Naive thymus-derived CD4-positive, alpha-beta T cell (primary cell): ENCODE measurements at regions of chr11 and their contacts with region 1.

Region 1: GRCh38 chr11:31397239-31397834 is 27.7 kb downstream of the DNAJC24 start:
- DNase-seq: peak in 5 of 9 donors; percentile 18 to 38 (median 35)
- ATAC-seq: peak; percentile 37
- H3K4me3 ChIP-seq: no peak overlapping the region
- H3K4me3 Mint-ChIP-seq: no peak overlapping the region
- H3K27ac ChIP-seq: no peak overlapping the region
- H3K27ac Mint-ChIP-seq: no peak overlapping the region
- H3K4me1 ChIP-seq: no peaks in the 10 kb centered on the region
- H3K4me1 Mint-ChIP-seq: peaks cover 0 to 7% (median 6%) of the 10 kb centered on the region in 7 donors
- H3K27me3 ChIP-seq: no peaks in the 10 kb centered on the region
- H3K27me3 Mint-ChIP-seq: no peaks in the 10 kb centered on the region

Region 2: GRCh38 chr11:30059172-30059815 is 1338.0 kb before region 1 on chr11:
- CTCF ChIA-PET with region 1: no interaction called
- POLR2A ChIA-PET with region 1: no interaction called
- intact Hi-C with region 1: no loop called
- DNase-seq: no peak
- ATAC-seq: no peak
- H3K4me3 ChIP-seq: no peak overlapping the region
- H3K4me3 Mint-ChIP-seq: no peak overlapping the region
- H3K27ac ChIP-seq: no peak overlapping the region
- H3K27ac Mint-ChIP-seq: no peak overlapping the region
- H3K4me1 ChIP-seq: no peaks in the 10 kb centered on the region
- H3K4me1 Mint-ChIP-seq: no peaks in the 10 kb centered on the region
- H3K27me3 ChIP-seq: no peaks in the 10 kb centered on the region
- H3K27me3 Mint-ChIP-seq: no peaks in the 10 kb centered on the region

Region 3: GRCh38 chr11:31340903-31341572 is 56.3 kb before region 1 on chr11:
- CTCF ChIA-PET with region 1: interaction called, 3 read pairs
- POLR2A ChIA-PET with region 1: no interaction called
- intact Hi-C with region 1: loop called in 1 of 2 experiments (anchors 1 kb)
- DNase-seq: peak in 5 of 9 donors; percentile 9 to 24 (median 13)
- ATAC-seq: no peak
- H3K4me3 ChIP-seq: no peak overlapping the region
- H3K4me3 Mint-ChIP-seq: no peak overlapping the region
- H3K27ac ChIP-seq: no peak overlapping the region
- H3K27ac Mint-ChIP-seq: no peak overlapping the region
- H3K4me1 ChIP-seq: no peaks in the 10 kb centered on the region
- H3K4me1 Mint-ChIP-seq: peaks cover 0 to 3% (median 0%) of the 10 kb centered on the region in 7 donors
- H3K27me3 ChIP-seq: no peaks in the 10 kb centered on the region
- H3K27me3 Mint-ChIP-seq: peaks cover 5 to 27% (median 18%) of the 10 kb centered on the region in 5 donors

Region 4: DNA sequence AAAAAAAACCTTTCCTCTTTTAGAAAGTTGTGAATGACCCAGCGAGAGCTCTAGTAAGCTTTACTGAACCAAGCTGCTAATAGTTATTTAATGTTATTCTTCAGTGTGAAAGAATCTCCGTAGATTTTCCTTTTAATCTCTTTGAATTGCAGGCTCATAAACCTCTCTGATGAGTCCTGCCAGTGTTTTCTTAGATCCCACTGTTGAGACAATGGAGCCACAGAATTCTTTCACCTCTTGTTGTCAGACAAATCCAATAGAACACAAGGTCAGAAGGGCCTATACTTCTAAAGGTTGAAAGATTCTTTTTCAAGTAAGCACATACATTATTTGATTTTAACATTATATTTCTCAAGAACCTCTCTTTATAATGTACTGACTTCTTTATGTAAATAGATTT is 24.5 kb after region 1 on chr11:
- CTCF ChIA-PET with region 1: no interaction called
- POLR2A ChIA-PET with region 1: no interaction called
- intact Hi-C with region 1: no loop called
- DNase-seq: no peak
- ATAC-seq: no peak
- H3K4me3 ChIP-seq: no peak overlapping the region
- H3K4me3 Mint-ChIP-seq: no peak overlapping the region
- H3K27ac ChIP-seq: no peak overlapping the region
- H3K27ac Mint-ChIP-seq: no peak overlapping the region
- H3K4me1 ChIP-seq: no peaks in the 10 kb centered on the region
- H3K4me1 Mint-ChIP-seq: peaks cover 0 to 8% (median 0%) of the 10 kb centered on the region in 7 donors
- H3K27me3 ChIP-seq: no peaks in the 10 kb centered on the region
- H3K27me3 Mint-ChIP-seq: no peaks in the 10 kb centered on the region

Region 5: DNA sequence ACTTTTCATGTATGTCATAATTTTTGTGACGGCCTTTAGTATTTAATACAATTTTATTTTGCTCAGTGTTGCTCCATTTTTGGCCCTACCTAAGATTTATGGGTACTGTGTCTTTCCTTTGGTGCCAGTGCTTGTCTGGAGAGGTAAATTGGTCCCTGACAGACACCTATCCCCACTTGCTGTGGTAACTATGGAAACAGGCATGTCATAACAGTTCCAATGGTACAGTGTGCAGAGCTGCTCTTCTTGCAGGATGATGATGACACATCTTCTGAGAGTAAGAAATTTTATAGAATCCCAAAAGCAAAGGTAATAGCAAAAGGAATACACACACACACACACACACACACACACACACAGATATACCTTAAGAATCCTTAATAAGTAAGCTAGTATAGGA is 230.8 kb after region 1 on chr11:
- CTCF ChIA-PET with region 1: no interaction called
- POLR2A ChIA-PET with region 1: no interaction called
- intact Hi-C with region 1: no loop called
- DNase-seq: no peak
- ATAC-seq: no peak
- H3K4me3 ChIP-seq: no peak overlapping the region
- H3K4me3 Mint-ChIP-seq: no peak overlapping the region
- H3K27ac ChIP-seq: no peak overlapping the region
- H3K27ac Mint-ChIP-seq: no peak overlapping the region
- H3K4me1 ChIP-seq: no peaks in the 10 kb centered on the region
- H3K4me1 Mint-ChIP-seq: no peaks in the 10 kb centered on the region
- H3K27me3 ChIP-seq: no peaks in the 10 kb centered on the region
- H3K27me3 Mint-ChIP-seq: no peaks in the 10 kb centered on the region

Region 6: DNA sequence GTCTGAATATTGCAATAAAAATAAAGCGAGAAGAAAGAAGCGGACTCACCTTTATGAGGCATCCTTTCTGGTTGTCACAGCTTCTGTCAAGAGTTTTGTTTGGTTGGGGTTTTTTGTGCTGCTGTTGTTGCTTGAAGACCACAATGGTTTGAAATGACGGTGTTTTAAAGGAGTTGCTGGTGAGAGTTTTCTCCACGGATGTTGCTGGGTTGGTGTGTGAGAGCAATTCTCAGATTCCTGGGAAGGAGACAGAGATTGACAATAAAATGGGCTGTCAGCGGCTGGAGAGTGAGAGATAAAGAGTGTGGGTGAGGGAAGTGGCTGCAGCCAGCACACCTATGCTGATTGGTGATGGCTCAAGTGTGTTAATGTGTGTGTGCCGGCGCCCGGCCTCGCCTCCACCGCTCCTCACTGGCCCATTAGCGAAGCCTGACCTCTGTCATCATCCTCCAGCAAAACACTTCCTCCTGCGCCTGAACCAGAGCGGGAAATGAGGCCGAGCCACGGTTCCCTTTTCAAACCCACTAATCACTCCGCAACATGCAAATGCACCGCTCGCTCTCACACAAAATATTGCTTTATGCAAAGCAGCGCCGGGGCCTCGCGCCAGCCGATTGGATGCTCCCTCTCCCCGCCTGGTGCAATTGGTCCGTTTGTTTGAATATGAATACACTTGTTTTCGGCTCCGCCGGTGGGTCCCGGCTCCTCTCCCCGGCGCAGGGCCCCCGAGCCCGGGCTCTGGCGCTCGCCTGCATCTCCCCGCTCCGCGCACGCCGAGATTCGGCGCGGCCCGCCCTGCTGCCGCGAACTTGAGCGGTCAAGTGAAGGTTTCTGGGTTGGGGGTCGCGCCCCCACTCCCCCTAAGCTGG is 413.7 kb after region 1 on chr11 and contains the start of gene PAX6:
- CTCF ChIA-PET with region 1: no interaction called
- POLR2A ChIA-PET with region 1: no interaction called
- intact Hi-C with region 1: loop called in 1 of 2 experiments (anchors 10 kb)
- DNase-seq: peak in 2 of 9 donors; percentile 19 to 43
- ATAC-seq: peak; percentile 77
- H3K4me3 ChIP-seq: peak within 1 kb of the TSS; percentile 46
- H3K4me3 Mint-ChIP-seq: peak within 1 kb of the TSS; percentile 73 to 94 (median 84)
- H3K27ac ChIP-seq: no peak within 1 kb of the TSS
- H3K27ac Mint-ChIP-seq: peak within 1 kb of the TSS in 5 of 9 donors; percentile 8 to 73 (median 59)
- H3K4me1 ChIP-seq: peaks cover 16 to 28% of the 10 kb centered on the region in 2 donors
- H3K4me1 Mint-ChIP-seq: peaks cover 22 to 73% (median 61%) of the 10 kb centered on the region in 7 donors
- H3K27me3 ChIP-seq: peaks cover 16 to 66% of the 10 kb centered on the region in 2 donors
- H3K27me3 Mint-ChIP-seq: peaks cover 73 to 86% (median 77%) of the 10 kb centered on the region in 5 donors
- total RNA-seq, gene PAX6: not detected

Region 7: GRCh38 chr11:31870609-31871309 is 473.4 kb after region 1 on chr11:
- CTCF ChIA-PET with region 1: no interaction called
- POLR2A ChIA-PET with region 1: no interaction called
- intact Hi-C with region 1: loop called in 1 of 2 experiments (anchors 5 kb)
- DNase-seq: peak in 2 of 9 donors; percentile 2 to 4
- ATAC-seq: no peak
- H3K4me3 ChIP-seq: no peak overlapping the region
- H3K4me3 Mint-ChIP-seq: no peak overlapping the region
- H3K27ac ChIP-seq: no peak overlapping the region
- H3K27ac Mint-ChIP-seq: no peak overlapping the region
- H3K4me1 ChIP-seq: no peaks in the 10 kb centered on the region
- H3K4me1 Mint-ChIP-seq: no peaks in the 10 kb centered on the region
- H3K27me3 ChIP-seq: no peaks in the 10 kb centered on the region
- H3K27me3 Mint-ChIP-seq: peaks cover 21 to 56% (median 42%) of the 10 kb centered on the region in 5 donors

Region 8: GRCh38 chr11:32006799-32007388 is 609.6 kb after region 1 on chr11:
- CTCF ChIA-PET with region 1: no interaction called
- POLR2A ChIA-PET with region 1: no interaction called
- intact Hi-C with region 1: loop called (anchors 1 to 2 kb)
- DNase-seq: peak in 5 of 9 donors; percentile 4 to 27 (median 7)
- ATAC-seq: peak; percentile 64
- H3K4me3 ChIP-seq: no peak overlapping the region
- H3K4me3 Mint-ChIP-seq: peak overlapping the region in 1 of 10 donors; percentile 2
- H3K27ac ChIP-seq: no peak overlapping the region
- H3K27ac Mint-ChIP-seq: no peak overlapping the region
- H3K4me1 ChIP-seq: no peaks in the 10 kb centered on the region
- H3K4me1 Mint-ChIP-seq: peaks cover 0 to 5% (median 0%) of the 10 kb centered on the region in 7 donors
- H3K27me3 ChIP-seq: no peaks in the 10 kb centered on the region
- H3K27me3 Mint-ChIP-seq: peaks cover 17 to 40% (median 35%) of the 10 kb centered on the region in 5 donors

Region 9: GRCh38 chr11:32594272-32594671 is 1196.9 kb after region 1 on chr11:
- CTCF ChIA-PET with region 1: no interaction called
- POLR2A ChIA-PET with region 1: no interaction called
- intact Hi-C with region 1: no loop called
- DNase-seq: no peak
- ATAC-seq: peak; percentile 69
- H3K4me3 ChIP-seq: no peak overlapping the region
- H3K4me3 Mint-ChIP-seq: no peak overlapping the region
- H3K27ac ChIP-seq: no peak overlapping the region
- H3K27ac Mint-ChIP-seq: no peak overlapping the region
- H3K4me1 ChIP-seq: no peaks in the 10 kb centered on the region
- H3K4me1 Mint-ChIP-seq: peaks cover 10 to 40% (median 24%) of the 10 kb centered on the region in 7 donors
- H3K27me3 ChIP-seq: no peaks in the 10 kb centered on the region
- H3K27me3 Mint-ChIP-seq: no peaks in the 10 kb centered on the region